ENCODE measurements at regions of chr18 and their contacts with region 1.

Region 1: DNA sequence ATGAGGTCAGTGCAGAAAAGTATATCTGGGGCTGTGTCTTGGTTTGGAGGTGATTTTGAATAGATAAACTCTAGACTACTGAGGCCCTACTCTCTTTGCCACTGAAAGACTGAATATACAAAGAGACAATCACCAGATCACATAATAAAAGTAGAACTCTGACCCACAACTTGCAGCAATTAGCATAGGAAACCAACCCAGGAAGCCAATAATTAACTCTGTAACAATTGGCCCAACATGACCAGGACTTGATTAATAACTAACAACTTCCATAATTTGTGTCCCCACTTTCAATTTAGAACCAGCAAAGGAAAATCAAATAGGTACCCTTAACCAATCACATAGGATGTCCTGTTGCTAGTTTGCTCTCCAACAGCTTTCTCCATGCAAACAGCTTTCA is 1104.9 kb upstream of the CELF4 start:
- DNase-seq: no peak
- H3K4me3 Mint-ChIP-seq: no peak overlapping the region
- H3K27ac Mint-ChIP-seq: no peak overlapping the region
- H3K4me1 Mint-ChIP-seq: no peaks in the 10 kb centered on the region
- H3K27me3 Mint-ChIP-seq: no peaks in the 10 kb centered on the region

Region 2: DNA sequence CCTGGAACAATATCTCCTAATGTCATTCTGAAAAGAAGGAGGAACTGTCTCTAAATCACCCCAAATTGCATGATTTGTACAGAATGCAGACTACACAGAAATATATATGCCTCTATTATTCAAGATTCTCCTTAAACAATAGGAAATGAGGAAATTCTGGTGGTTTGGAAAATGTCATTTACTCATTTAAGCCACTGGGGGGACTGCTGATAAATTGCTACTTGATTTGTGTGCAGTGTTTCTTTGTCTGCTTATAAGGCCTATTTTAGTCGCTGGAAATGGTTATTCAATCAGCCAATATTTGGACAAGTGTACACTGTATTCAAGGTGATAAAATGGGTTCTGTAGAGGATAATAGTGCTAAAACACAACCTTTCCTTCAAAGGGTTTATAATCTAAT is 303.0 kb before region 1 on chr18:
- CTCF ChIA-PET with region 1: no interaction called
- intact Hi-C with region 1: no loop called
- DNase-seq: no peak
- H3K4me3 Mint-ChIP-seq: no peak overlapping the region
- H3K27ac Mint-ChIP-seq: no peak overlapping the region
- H3K4me1 Mint-ChIP-seq: peaks cover 13% of the 10 kb centered on the region
- H3K27me3 Mint-ChIP-seq: no peaks in the 10 kb centered on the region

Region 3: GRCh38 chr18:38402509-38402908 is 268.0 kb before region 1 on chr18:
- CTCF ChIA-PET with region 1: interaction called, 10 read pairs
- intact Hi-C with region 1: no loop called
- DNase-seq: no peak
- H3K4me3 Mint-ChIP-seq: no peak overlapping the region
- H3K27ac Mint-ChIP-seq: no peak overlapping the region
- H3K4me1 Mint-ChIP-seq: no peaks in the 10 kb centered on the region
- H3K27me3 Mint-ChIP-seq: no peaks in the 10 kb centered on the region